PC-9 (cell line): ENCODE measurements at regions of chr7 and their contacts with region 1.

Region 1: DNA sequence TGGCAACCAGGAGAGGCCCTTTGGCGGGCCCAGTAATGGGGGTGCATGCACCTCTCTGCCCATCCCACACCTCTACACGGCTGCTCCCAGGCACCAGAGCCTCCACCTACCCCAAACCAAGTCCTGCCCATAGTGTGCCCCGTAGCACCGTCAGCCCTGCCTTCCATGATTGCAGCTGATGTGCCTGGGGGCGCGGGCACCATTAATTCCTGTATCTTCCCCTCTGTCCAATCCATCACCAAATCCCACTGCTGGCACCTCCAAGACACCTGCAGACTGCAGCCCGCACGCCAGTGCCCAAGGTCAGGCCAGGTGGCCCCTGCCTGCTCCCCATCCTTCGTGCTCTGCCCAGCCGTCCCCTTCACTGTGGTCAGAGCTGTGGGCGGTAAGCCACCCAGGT is 533.0 kb downstream of the PTPRN2 start:
- DNase-seq: no peak
- H3K4me3 ChIP-seq: no peak overlapping the region
- H3K27ac ChIP-seq: no peak overlapping the region
- H3K4me1 ChIP-seq: no peaks in the 10 kb centered on the region
- H3K27me3 ChIP-seq: peaks cover 83% of the 10 kb centered on the region
- CTCF ChIP-seq: no peak

Region 2: DNA sequence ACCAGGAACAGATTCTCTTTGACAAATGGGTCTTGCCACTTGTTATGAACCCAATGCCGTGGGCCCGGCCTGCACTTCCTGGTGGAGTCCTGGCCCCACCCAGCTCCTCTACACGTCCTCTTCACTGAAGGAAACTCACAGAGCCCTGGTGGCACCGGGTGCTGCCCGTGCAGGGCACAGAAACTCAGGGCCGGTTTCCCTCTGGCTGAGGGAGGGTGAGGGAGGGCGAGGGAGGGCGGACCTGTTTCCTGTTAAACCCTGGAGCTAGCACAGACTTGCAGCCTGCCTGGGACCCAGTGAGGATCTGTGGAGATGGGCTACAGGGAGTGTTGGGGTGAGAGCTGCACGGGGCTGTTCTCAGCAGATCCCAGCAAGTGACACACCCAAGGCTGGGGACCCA is 63.3 kb before region 1 on chr7:
- CTCF ChIA-PET with region 1: no interaction called
- POLR2A ChIA-PET with region 1: no interaction called
- intact Hi-C with region 1: no loop called
- DNase-seq: no peak
- H3K4me3 ChIP-seq: no peak overlapping the region
- H3K27ac ChIP-seq: no peak overlapping the region
- H3K4me1 ChIP-seq: no peaks in the 10 kb centered on the region
- H3K27me3 ChIP-seq: peaks cover 96% of the 10 kb centered on the region
- CTCF ChIP-seq: no peak

Region 3: GRCh38 chr7:158407581-158408317 is 353.1 kb after region 1 on chr7:
- CTCF ChIA-PET with region 1: no interaction called
- POLR2A ChIA-PET with region 1: no interaction called
- intact Hi-C with region 1: loop called (anchors 5 kb)
- DNase-seq: peak in 1 of 2 experiments; percentile 5
- H3K4me3 ChIP-seq: no peak overlapping the region
- H3K27ac ChIP-seq: no peak overlapping the region
- H3K4me1 ChIP-seq: no peaks in the 10 kb centered on the region
- H3K27me3 ChIP-seq: peaks cover 78% of the 10 kb centered on the region
- CTCF ChIP-seq: peak; percentile 70